ENCODE measurements at regions of chr2 and their contacts with region 1.

Region 1: DNA sequence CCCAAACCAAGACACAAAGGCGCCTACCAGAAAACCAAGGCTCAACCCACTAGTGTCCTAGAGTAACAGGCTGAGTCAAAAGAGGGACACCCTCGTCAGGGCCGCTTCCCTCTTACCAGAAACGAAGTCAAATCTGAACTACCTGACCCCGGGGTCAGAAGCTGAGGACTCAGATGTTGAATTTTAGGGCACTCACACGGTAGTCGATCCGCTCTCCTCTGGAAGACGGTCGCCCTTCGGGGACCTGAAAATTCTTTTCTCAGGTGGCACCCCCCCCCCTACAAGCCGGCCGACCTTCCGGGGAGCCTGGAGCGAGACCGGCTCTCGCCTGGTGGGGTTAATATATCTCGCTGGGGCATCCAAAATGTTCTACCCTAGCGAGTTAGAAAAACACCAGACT is 121.1 kb upstream of the KCNJ3 start:
- DNase-seq: no peak
- H3K4me3 ChIP-seq: no peak overlapping the region
- H3K27ac ChIP-seq: no peak overlapping the region
- H3K4me1 ChIP-seq: no peaks in the 10 kb centered on the region
- H3K27me3 ChIP-seq: no peaks in the 10 kb centered on the region
- CTCF ChIP-seq: no peak
- POLR2A ChIP-seq: no peak

Region 2: GRCh38 chr2:154639997-154640396 is 62.6 kb after region 1 on chr2:
- intact Hi-C with region 1: loop called (anchors 2 kb)
- DNase-seq: no peak
- H3K4me3 ChIP-seq: no peak overlapping the region
- H3K27ac ChIP-seq: no peak overlapping the region
- H3K4me1 ChIP-seq: no peaks in the 10 kb centered on the region
- H3K27me3 ChIP-seq: no peaks in the 10 kb centered on the region
- CTCF ChIP-seq: no peak
- POLR2A ChIP-seq: no peak

Region 3: GRCh38 chr2:155161314-155161713 is 583.9 kb after region 1 on chr2:
- intact Hi-C with region 1: loop called (anchors 5 kb)
- DNase-seq: no peak
- H3K4me3 ChIP-seq: no peak overlapping the region
- H3K27ac ChIP-seq: no peak overlapping the region
- H3K4me1 ChIP-seq: no peaks in the 10 kb centered on the region
- H3K27me3 ChIP-seq: no peaks in the 10 kb centered on the region
- CTCF ChIP-seq: no peak
- POLR2A ChIP-seq: no peak

Measured in breast epithelium (tissue), 4 donors.